ENCODE measurements at regions of chr3 and their contacts with region 1.

Region 1: GRCh38 chr3:38843898-38844297 is 27.9 kb upstream of the SCN10A start:
- DNase-seq: peak in 1 of 2 experiments; percentile 46
- ATAC-seq: peak; percentile 93 to 94
- H3K4me3 ChIP-seq: no peak overlapping the region
- H3K27ac ChIP-seq: no peak overlapping the region
- H3K4me1 ChIP-seq: no peaks in the 10 kb centered on the region
- CTCF ChIP-seq: peak; percentile 53
- EP300 ChIP-seq: no peak
- POLR2A ChIP-seq: no peak
- RAD21 ChIP-seq: peak; percentile 72 to 80

Region 2: GRCh38 chr3:38829404-38829803 is 14.5 kb before region 1 on chr3:
- CTCF ChIA-PET with region 1: interaction called, 15 read pairs
- POLR2A ChIA-PET with region 1: no interaction called
- DNase-seq: peak in 1 of 2 experiments; percentile 32
- ATAC-seq: peak; percentile 83 to 92
- H3K4me3 ChIP-seq: no peak overlapping the region
- H3K27ac ChIP-seq: peak overlapping the region in 1 of 2 experiments; percentile 70; a peak in 3 of 6 replicates
- H3K4me1 ChIP-seq: peaks cover 16% of the 10 kb centered on the region; the same call in 2 of the 3 replicates
- CTCF ChIP-seq: no peak
- EP300 ChIP-seq: no peak
- POLR2A ChIP-seq: no peak
- RAD21 ChIP-seq: no peak

Region 3: GRCh38 chr3:38925351-38925750 is 81.5 kb after region 1 on chr3:
- CTCF ChIA-PET with region 1: no interaction called
- POLR2A ChIA-PET with region 1: no interaction called
- DNase-seq: no peak
- ATAC-seq: no peak
- H3K4me3 ChIP-seq: no peak overlapping the region
- H3K27ac ChIP-seq: no peak overlapping the region
- H3K4me1 ChIP-seq: no peaks in the 10 kb centered on the region
- CTCF ChIP-seq: no peak
- EP300 ChIP-seq: no peak
- POLR2A ChIP-seq: no peak
- RAD21 ChIP-seq: no peak

Region 4: GRCh38 chr3:39896184-39896583 is 1052.3 kb after region 1 on chr3:
- CTCF ChIA-PET with region 1: no interaction called
- POLR2A ChIA-PET with region 1: no interaction called
- DNase-seq: no peak
- ATAC-seq: no peak
- H3K4me3 ChIP-seq: no peak overlapping the region
- H3K27ac ChIP-seq: no peak overlapping the region
- H3K4me1 ChIP-seq: no peaks in the 10 kb centered on the region
- CTCF ChIP-seq: no peak
- EP300 ChIP-seq: no peak
- POLR2A ChIP-seq: no peak
- RAD21 ChIP-seq: no peak